ENCODE measurements at regions of chr6 and their contacts with region 1.

Region 1: GRCh38 chr6:153081914-153082313 is 49.2 kb downstream of the RGS17 start:
- DNase-seq: no peak
- H3K4me3 ChIP-seq: no peak overlapping the region
- H3K27ac ChIP-seq: no peak overlapping the region
- H3K4me1 ChIP-seq: no peaks in the 10 kb centered on the region
- H3K27me3 ChIP-seq: no peaks in the 10 kb centered on the region
- CTCF ChIP-seq: no peak

Region 2: GRCh38 chr6:151876122-151876521 is 1205.8 kb before region 1 on chr6:
- intact Hi-C with region 1: no loop called
- DNase-seq: no peak
- H3K4me3 ChIP-seq: no peak overlapping the region
- H3K27ac ChIP-seq: no peak overlapping the region
- H3K4me1 ChIP-seq: no peaks in the 10 kb centered on the region
- H3K27me3 ChIP-seq: no peaks in the 10 kb centered on the region
- CTCF ChIP-seq: no peak

Region 3: DNA sequence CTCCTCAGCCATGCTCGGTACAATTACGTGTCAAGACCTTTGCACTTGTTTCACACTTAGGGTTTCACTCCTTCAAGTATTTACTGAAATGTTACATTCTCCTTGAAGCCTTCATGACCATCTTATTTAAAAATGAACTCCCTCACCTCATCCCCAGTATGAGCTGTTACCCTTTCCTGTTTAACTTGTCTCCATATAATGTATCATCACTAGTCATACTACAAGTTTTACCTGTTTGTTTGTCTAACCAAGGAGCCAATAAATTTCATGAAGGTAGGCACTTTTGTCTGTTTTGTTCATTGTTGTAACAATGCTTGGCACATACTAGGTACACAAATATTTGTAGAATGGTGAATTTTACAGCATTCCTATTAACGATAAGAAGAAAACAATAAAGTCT is 33.3 kb before region 1 on chr6:
- intact Hi-C with region 1: loop called (anchors 2 kb)
- DNase-seq: no peak
- H3K4me3 ChIP-seq: no peak overlapping the region
- H3K27ac ChIP-seq: no peak overlapping the region
- H3K4me1 ChIP-seq: no peaks in the 10 kb centered on the region
- H3K27me3 ChIP-seq: no peaks in the 10 kb centered on the region
- CTCF ChIP-seq: no peak

Region 4: DNA sequence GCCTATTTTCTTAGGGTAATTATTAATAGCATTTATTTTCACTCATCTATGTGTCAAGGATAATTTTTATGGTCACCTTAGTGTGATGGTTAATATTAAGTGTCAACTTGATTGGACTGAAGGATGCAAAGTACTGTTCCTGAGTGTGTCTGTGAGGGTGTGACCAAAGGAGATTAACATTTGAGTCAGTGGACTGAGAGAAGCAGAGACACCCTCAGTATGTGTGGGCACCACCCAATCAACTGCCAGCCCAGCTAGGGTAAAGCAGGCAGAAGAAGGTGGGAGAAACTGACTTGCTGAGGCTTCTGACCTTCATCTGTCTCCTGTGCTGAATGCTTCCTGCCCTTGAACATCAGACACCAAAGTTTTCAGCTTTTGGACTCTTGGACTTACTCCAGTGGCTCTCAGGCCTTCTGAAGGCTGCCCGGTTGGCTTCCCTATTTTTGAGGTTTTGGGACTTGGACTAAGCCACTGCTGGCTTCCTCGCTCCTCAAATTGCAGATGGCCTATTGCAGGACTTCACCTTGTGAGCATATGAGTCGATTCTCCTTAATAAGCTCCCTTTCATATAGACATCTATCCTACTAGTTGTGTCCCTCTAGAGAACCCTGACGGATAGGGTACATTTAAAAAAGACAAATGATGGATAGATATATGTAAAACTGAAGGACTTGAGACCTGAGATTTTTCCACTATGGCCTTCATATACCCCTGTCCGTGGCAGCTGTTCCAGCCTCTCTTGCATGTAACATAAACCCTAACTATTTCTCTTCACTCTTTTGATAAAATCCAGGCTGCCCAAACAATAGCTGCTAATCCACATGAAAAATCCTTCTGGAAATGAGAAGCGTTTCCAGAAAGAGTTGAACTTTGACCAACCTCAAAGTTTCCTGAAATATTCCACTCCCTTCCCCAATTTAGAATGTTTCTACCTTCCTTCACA is 111.3 kb after region 1 on chr6:
- intact Hi-C with region 1: no loop called
- DNase-seq: no peak
- H3K4me3 ChIP-seq: no peak overlapping the region
- H3K27ac ChIP-seq: no peak overlapping the region
- H3K4me1 ChIP-seq: no peaks in the 10 kb centered on the region
- H3K27me3 ChIP-seq: no peaks in the 10 kb centered on the region
- CTCF ChIP-seq: no peak

Measured in colonic mucosa (tissue), 4 donors.